Lower leg skin (tissue), 4 donors: ENCODE measurements at regions of chr7 and their contacts with region 1.

Region 1: DNA sequence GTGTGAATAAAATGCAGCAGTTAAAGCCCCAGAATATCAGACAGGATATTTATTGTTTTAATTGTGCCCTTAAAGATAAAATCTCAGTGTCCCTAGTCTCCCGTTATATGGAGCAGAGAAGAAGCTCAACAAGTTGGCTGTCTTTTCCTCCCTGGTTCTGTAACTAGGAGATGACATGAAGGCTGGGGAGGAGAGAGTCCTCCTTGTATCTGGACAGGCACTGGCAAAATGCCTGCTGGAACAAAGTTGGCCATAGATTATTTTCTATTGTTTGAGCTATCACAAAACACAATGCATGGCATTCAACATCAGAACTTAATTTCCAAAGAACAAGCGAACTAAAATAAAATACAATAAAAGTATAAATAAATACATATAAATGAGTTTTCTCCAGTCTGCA is 694.9 kb upstream of the KCND2 start:
- DNase-seq: no peak
- H3K4me3 ChIP-seq: no peak overlapping the region
- CTCF ChIP-seq: no peak
- POLR2A ChIP-seq: no peak

Region 2: DNA sequence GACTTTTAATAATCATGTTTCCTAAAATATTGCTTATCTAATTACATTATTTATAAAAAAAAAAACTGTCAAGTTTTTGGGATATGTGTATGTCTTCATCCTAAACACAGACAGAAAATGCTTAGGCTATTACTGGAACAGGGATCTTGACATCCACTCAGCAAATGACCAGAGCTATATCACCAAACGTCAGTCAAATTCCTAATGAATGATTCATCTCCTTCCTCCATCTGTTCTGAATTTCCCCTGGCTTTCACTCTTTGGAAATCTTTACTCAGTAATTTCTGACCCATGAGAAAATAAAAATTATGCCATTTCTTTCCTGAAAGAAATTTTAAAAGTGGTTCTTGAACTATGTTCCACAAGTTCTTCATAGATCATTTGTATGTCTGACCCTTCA is 142.4 kb after region 1 on chr7:
- intact Hi-C with region 1: no loop called
- DNase-seq: no peak
- H3K4me3 ChIP-seq: no peak overlapping the region
- CTCF ChIP-seq: no peak
- POLR2A ChIP-seq: no peak

Region 3: DNA sequence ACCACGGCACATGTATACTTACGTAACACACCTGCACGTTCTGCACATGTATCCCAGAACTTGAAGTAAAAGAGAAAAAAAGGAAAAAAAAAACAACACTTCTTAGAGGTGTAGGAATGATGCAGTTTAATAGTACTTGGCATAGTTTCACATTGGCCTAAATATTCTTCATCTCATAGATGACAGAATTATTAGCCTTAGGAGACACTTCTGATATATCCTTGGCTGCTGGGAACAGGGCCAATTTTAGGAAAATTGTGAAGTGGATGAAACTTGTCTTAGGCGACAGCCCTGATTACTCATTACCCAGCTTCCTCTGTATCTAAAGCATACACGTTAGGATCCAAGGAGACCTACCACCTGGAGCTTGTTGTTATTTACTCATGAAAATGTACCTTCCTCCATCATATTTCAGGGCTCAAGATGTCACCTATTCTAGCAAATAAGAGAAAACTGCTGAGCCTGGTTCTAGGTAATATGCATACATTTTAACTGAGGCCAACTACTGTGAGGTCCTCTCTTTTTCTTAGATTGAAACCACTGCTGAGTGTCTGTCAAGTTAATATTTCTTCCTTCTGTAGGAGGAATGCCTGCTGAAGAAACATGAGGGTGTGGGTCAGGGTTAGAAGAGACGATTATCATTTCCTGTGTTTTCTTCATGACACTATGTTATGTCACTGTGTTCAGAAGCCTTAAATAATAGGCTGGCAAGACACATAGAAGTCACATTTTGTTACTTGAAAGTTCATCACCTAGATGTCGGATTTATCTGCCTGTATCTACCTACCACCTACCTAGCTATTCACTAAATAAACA is 1454.7 kb after region 1 on chr7:
- intact Hi-C with region 1: loop called (anchors 10 kb)
- DNase-seq: no peak
- H3K4me3 ChIP-seq: no peak overlapping the region
- CTCF ChIP-seq: no peak
- POLR2A ChIP-seq: no peak